ENCODE measurements at regions of chr17 and their contacts with region 1.

Region 1: DNA sequence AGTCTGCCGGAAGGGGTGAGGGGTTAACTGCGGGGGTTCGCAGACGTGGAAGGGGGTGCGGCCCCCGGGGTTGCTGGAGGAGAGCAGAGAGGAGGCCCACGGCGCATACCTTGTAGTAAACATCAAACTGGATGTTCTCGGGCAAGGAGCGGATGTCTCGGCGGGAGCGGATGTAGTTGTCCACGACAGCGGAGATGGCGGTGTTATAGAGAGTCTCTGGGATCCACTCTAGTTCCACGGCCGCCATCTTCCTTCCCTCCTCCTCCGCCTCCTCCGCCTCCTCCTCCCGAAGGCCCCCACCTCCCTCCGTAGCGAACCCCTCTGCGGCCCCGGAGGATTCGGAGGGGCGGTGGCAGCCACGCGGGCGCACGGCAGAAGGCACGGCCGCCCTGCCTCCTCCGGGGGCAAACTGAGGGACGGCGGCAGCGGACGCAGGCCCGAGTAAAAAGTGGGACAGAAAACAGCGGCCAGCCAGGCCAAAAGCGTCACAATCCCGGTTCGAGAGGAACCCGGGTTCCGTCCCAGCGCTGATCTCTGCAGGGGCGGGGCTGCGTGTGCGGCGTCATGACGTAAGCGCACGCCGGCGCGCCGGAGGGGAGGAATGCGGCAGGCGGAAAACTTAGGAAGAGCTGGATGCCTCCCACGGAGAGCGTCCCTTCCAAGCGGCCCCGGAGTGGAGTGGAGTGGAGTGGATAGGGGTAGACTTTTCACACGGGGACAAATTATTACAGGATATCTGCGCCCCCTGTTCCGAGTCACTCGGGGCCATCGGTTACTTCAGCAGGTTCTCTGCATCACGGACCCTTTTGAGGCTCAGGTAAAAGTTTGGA is at the start of gene APPBP2:
- DNase-seq: peak; percentile 88 to 89
- ATAC-seq: peak; percentile 98 to 99 (median 98)
- H3K4me3 ChIP-seq: peak within 1 kb of the TSS; percentile 59 to 98 (median 88)
- H3K27ac ChIP-seq: peak within 1 kb of the TSS; percentile 92 to 100 (median 99)
- H3K4me1 ChIP-seq: peaks cover 3 to 49% (median 40%) of the 10 kb centered on the region in 9 donors
- H3K27me3 ChIP-seq: no peaks in the 10 kb centered on the region
- CTCF ChIP-seq: no peak
- total RNA-seq, gene APPBP2: 12.5 to 22.8 (median 17.9) TPM

Region 2: GRCh38 chr17:60468371-60468770 is 57.5 kb before region 1 on chr17:
- intact Hi-C with region 1: loop called in 2 of 10 experiments (anchors 5 kb)
- DNase-seq: no peak
- ATAC-seq: no peak
- H3K4me3 ChIP-seq: no peak overlapping the region
- H3K27ac ChIP-seq: no peak overlapping the region
- H3K4me1 ChIP-seq: peaks cover 0 to 36% (median 26%) of the 10 kb centered on the region in 9 donors
- H3K27me3 ChIP-seq: no peaks in the 10 kb centered on the region
- CTCF ChIP-seq: no peak

Region 3: DNA sequence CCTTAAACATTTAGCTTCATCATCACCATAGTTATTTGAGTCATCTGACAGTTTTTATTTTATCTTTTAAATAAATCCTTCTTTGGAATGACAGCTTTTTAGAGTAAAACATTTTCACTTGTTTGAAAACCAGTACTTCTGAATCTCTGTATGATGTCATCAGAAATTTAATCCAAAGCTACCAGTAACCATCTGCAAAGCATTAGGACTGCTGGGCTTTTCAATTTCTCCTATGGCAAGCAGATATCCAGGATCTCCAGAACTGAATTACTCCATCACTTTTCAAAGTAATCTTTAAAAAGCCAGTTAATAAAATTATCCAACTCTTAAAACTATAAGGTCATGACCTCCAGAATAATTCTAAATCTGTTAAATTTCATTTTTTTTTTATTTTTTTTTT is 52.1 kb before region 1 on chr17:
- intact Hi-C with region 1: loop called in 2 of 10 experiments (anchors 5 kb)
- DNase-seq: no peak
- ATAC-seq: no peak
- H3K4me3 ChIP-seq: no peak overlapping the region
- H3K27ac ChIP-seq: no peak overlapping the region
- H3K4me1 ChIP-seq: peaks cover 0 to 23% (median 17%) of the 10 kb centered on the region in 9 donors
- H3K27me3 ChIP-seq: no peaks in the 10 kb centered on the region
- CTCF ChIP-seq: no peak

Region 4: DNA sequence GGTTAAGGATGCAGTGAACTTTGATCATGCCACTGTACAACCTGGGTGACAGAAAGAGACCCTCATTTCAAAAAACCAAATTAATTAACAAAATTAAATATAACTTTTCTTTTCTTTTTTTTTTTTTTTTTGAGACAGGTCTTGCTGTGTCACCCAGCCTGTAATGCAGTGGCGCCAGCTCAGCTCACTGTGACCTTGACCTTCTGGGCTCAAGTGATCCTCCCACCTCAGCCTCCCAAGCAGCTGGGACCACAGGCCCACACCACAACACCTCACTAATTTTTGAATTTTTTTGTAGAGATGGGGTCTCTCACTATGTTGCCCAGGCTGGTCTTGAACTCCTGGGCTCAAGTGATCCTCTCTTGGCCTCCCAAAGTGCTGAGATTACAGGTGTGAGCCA is 42.7 kb after region 1 on chr17:
- intact Hi-C with region 1: loop called in 2 of 10 experiments (anchors 2 to 5 kb)
- DNase-seq: no peak
- ATAC-seq: no peak
- H3K4me3 ChIP-seq: no peak overlapping the region
- H3K27ac ChIP-seq: no peak overlapping the region
- H3K4me1 ChIP-seq: peaks cover 0 to 43% (median 28%) of the 10 kb centered on the region in 9 donors
- H3K27me3 ChIP-seq: no peaks in the 10 kb centered on the region
- CTCF ChIP-seq: no peak

Region 5: DNA sequence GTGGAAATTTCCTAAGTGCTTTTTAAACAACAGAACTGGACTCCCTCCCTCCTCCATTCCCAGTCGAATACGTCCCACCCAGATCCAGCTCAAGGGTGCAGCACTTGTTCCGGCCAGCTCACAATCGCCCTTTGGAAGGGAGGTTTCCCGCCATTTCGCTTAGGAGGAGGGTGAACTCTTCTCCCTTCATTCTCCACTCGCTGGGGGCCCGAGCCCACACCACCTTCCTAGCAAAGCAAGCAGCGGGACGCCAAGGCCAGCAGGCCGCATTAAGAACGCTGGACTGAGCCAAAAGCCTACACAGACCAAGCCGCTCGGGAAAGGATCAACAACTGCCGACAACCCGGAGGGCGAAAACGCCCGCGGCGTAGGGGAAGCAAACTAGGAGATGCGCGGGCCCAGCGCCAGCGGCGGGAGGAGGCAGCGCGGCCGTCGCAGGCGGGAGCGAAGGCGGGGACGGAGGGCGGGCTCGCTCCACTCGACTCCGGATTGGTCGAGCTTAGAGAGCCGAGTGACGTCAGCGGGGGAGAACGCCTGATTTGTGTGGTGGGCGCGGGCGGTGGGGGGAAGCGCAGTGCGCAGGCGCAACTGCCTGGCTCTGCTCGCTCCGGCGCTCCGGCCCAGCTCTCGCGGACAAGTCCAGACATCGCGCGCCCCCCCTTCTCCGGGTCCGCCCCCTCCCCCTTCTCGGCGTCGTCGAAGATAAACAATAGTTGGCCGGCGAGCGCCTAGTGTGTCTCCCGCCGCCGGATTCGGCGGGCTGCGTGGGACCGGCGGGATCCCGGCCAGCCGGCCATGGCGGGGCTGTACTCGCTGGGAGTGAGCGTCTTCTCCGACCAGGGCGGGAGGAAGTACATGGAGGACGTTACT is 74.0 kb after region 1 on chr17 and contains the start of gene PPM1D:
- intact Hi-C with region 1: loop called in 4 of 10 experiments (anchors 1 to 2 kb)
- DNase-seq: peak; percentile 100
- ATAC-seq: peak; percentile 97 to 99 (median 98)
- H3K4me3 ChIP-seq: peak within 1 kb of the TSS; percentile 77 to 99 (median 94)
- H3K27ac ChIP-seq: peak within 1 kb of the TSS; percentile 83 to 99 (median 97)
- H3K4me1 ChIP-seq: peaks cover 0 to 58% (median 27%) of the 10 kb centered on the region in 9 donors
- H3K27me3 ChIP-seq: no peaks in the 10 kb centered on the region
- CTCF ChIP-seq: peak in 1 of 9 donors; percentile 8
- total RNA-seq, gene PPM1D: 4.5 to 10.6 (median 7.8) TPM